ENCODE measurements at regions of chr15 and their contacts with region 1.

Region 1: DNA sequence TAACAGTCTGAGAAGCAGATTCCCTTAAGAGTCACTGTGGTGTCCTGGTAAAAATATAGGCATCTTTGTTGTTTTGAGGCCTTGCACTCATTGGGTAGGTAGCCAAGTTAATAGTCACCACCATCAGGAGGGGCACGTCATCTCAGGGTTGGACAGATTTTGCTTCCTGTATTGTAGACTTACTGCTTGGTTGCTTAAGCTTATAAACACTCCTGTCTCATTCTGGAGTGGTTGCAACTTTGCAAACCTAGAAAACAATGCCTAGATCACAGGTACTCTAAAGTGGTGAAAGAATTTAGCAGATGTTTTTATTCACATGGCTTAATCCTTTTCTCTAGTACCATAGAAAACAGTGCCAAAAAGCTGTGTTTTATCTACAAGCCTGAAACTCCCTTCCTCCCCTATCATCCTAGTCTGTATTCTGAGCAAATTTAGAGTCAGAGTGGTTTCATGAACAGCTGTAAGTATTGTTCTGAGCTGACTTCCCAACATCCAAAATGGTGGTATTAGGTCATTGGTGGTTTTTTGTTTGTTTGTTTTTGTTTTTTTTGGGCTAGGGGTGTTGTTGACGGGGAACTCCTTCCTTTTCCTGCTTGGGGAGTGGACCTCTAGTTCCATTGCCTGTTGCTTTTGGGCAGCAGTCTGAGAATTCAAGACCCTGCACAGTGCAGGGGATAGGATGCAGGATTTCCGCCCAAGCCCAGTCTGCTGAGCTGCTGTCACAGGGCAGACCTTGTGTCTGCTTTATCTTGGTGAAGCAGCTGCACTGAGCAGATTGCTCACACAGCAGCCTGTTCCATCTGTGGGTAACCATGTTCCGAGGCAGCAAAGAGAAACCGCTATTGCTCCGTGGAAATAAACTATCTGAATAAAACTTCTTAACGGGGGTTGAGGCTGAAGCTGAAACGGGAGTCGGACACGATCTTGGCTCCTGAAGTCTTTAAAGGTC is 202.0 kb downstream of the AKAP13 start:
- DNase-seq: peak; percentile 91
- H3K4me3 Mint-ChIP-seq: peak overlapping the region; percentile 82
- H3K27ac Mint-ChIP-seq: peak overlapping the region; percentile 98
- H3K4me1 Mint-ChIP-seq: peaks cover 68% of the 10 kb centered on the region
- H3K27me3 Mint-ChIP-seq: no peaks in the 10 kb centered on the region

Region 2: GRCh38 chr15:85318048-85318731 is 264.2 kb before region 1 on chr15:
- intact Hi-C with region 1: loop called (anchors 10 kb)
- DNase-seq: peak; percentile 83
- H3K4me3 Mint-ChIP-seq: peak overlapping the region; percentile 64
- H3K27ac Mint-ChIP-seq: peak overlapping the region; percentile 86
- H3K4me1 Mint-ChIP-seq: peaks cover 55% of the 10 kb centered on the region
- H3K27me3 Mint-ChIP-seq: no peaks in the 10 kb centered on the region

Region 3: DNA sequence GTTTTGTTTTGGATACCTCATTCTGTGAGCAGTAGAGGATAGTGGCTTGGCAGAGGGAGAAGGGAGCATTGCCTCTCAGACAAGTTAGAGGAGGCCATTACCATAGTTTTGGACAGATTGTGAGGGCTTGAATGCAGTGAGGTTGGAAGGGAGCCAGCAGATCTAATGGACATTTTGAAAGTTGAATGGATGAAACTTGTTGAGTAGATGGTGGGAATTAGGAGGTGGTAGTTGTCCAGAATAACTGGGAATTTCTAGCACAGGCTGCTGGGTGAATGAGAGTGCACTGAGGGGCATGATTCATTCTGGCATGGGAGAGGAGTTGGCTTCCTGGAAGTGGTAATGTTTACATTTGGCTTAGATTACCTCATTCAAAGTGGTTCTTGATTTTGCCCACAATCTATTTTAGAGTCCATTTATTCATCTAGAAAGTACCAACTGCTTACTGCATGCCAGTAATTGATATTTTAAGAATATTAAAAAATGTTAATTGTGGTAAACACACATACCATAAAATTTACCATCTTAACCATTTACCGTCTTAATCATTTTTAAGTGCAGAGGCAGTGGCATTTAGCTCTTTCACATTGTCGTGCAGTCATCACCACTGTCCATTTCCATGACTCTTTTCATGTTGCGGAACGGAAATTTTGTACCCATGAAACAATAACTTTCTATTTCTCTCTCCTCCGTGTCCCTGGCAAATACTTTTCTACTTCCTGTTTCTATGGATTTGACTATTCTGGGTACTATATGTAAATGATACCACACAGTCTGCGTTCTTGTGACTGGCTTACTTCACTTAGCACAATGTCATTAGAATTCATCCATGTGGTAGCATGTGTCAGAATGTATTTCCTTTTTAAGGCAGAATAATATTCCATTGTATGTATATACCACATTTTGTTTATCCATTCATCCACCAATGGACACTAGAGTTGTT is 174.3 kb before region 1 on chr15:
- intact Hi-C with region 1: loop called (anchors 1 kb)
- DNase-seq: peak; percentile 76
- H3K4me3 Mint-ChIP-seq: peak overlapping the region; percentile 68
- H3K27ac Mint-ChIP-seq: peak overlapping the region; percentile 95
- H3K4me1 Mint-ChIP-seq: peaks cover 65% of the 10 kb centered on the region
- H3K27me3 Mint-ChIP-seq: no peaks in the 10 kb centered on the region

Region 4: DNA sequence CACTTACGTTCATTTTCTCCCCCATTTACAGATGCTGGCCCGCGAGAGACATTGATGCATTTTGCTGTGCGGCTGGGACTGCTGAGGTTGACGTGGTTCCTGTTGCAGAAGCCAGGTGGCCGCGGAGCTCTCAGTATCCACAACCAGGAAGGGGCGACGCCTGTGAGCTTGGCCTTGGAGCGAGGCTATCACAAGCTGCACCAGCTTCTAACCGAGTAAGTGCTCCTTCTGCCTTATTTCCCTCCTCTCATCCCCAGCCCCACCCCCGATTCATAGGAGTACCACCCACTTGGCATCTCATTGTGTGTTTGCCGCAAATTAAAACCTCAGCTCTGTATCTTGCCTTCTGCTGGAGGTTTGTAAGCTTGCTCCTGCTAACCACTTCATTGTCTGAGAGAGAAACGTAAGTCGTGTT is 38.7 kb before region 1 on chr15:
- intact Hi-C with region 1: loop called (anchors 1 kb)
- DNase-seq: peak; percentile 82
- H3K4me3 Mint-ChIP-seq: peak overlapping the region; percentile 74
- H3K27ac Mint-ChIP-seq: peak overlapping the region; percentile 64
- H3K4me1 Mint-ChIP-seq: peaks cover 75% of the 10 kb centered on the region
- H3K27me3 Mint-ChIP-seq: no peaks in the 10 kb centered on the region

Region 5: GRCh38 chr15:85597155-85597815 is 14.9 kb after region 1 on chr15:
- intact Hi-C with region 1: loop called (anchors 1 kb)
- DNase-seq: peak; percentile 76
- H3K4me3 Mint-ChIP-seq: peak overlapping the region; percentile 56
- H3K27ac Mint-ChIP-seq: peak overlapping the region; percentile 14
- H3K4me1 Mint-ChIP-seq: peaks cover 33% of the 10 kb centered on the region
- H3K27me3 Mint-ChIP-seq: no peaks in the 10 kb centered on the region

Region 6: GRCh38 chr15:85667491-85668424 is 85.4 kb after region 1 on chr15:
- intact Hi-C with region 1: loop called (anchors 1 kb)
- DNase-seq: peak; percentile 89
- H3K4me3 Mint-ChIP-seq: peak overlapping the region; percentile 47
- H3K27ac Mint-ChIP-seq: peak overlapping the region; percentile 95
- H3K4me1 Mint-ChIP-seq: peaks cover 23% of the 10 kb centered on the region
- H3K27me3 Mint-ChIP-seq: no peaks in the 10 kb centered on the region

Region 7: GRCh38 chr15:85707519-85708338 is 125.3 kb after region 1 on chr15:
- intact Hi-C with region 1: loop called (anchors 1 kb)
- DNase-seq: peak; percentile 75
- H3K4me3 Mint-ChIP-seq: peak overlapping the region; percentile 86
- H3K27ac Mint-ChIP-seq: peak overlapping the region; percentile 99
- H3K4me1 Mint-ChIP-seq: peaks cover 70% of the 10 kb centered on the region
- H3K27me3 Mint-ChIP-seq: no peaks in the 10 kb centered on the region

Measured in activated CD4-positive, alpha-beta T cell treated with anti-CD3 and anti-CD28 coated beads, Interleukin-2, amount 10 ng/mL, durations not matched to agents 24 days and 14 days (primary cell).